IMR-90 (cell line): ENCODE measurements at regions of chr6 and their contacts with region 1.

Region 1: DNA sequence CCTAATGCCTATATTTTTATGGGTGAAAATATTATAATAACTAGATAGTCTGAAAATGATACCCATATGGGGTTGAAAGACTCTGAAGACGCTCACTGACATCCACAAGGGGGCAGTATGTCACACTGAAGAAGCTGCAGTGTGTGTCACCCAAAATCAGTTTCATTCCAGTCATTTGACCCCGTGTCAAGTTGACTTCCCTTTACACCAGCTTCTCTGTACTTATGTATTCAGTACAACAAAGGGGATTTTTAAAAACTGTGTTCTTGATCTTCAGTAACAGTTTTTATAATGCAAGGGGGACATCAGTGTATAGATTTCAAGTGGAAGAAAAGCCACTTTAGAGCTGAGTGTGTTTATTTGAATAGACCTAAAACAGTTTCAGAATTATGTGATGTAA is 19.3 kb downstream of the FAXC start:
- DNase-seq: peak; percentile 79
- ATAC-seq: peak; percentile 89
- H3K4me3 ChIP-seq: no peak overlapping the region
- H3K27ac ChIP-seq: no peak overlapping the region
- H3K4me1 ChIP-seq: no peaks in the 10 kb centered on the region
- H3K27me3 ChIP-seq: no peaks in the 10 kb centered on the region
- CTCF ChIP-seq: peak; percentile 78
- POLR2A ChIP-seq: no peak
- RAD21 ChIP-seq: peak; percentile 63

Region 2: DNA sequence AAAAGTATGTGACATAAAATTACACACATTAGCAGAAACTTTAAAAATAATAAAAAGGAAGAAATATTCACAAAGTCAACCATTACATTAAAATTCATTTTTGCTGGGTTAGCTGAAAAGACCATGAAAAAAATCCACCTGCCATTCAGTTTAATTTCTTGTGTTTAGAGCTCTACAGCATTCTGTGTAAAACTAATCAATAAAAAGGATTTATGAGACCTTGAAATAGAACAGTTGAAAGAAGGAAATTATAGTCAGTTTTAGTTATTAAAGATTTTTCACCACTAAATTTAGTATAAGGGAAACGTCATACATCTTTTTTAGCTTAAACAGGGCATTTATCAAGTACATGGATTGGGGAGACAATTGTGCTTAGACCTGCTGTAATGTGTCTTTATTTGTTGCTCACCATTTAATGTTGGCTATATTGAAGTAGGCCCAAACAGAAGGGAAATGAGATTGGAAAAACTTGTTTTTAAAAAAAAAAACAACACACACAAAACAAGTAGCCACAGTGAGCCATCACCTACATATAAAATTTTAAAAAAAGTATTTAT is 934.5 kb before region 1 on chr6:
- CTCF ChIA-PET with region 1: no interaction called
- POLR2A ChIA-PET with region 1: no interaction called
- dilution Hi-C with region 1: no loop called
- in situ Hi-C with region 1: no loop called
- intact Hi-C with region 1: no loop called
- DNase-seq: no peak
- ATAC-seq: no peak
- H3K4me3 ChIP-seq: no peak overlapping the region
- H3K27ac ChIP-seq: no peak overlapping the region
- H3K4me1 ChIP-seq: no peaks in the 10 kb centered on the region
- H3K27me3 ChIP-seq: no peaks in the 10 kb centered on the region
- CTCF ChIP-seq: no peak
- POLR2A ChIP-seq: no peak
- RAD21 ChIP-seq: no peak

Region 3: GRCh38 chr6:98627129-98627775 is 702.9 kb before region 1 on chr6:
- CTCF ChIA-PET with region 1: no interaction called
- POLR2A ChIA-PET with region 1: no interaction called
- dilution Hi-C with region 1: no loop called
- in situ Hi-C with region 1: no loop called
- intact Hi-C with region 1: no loop called
- DNase-seq: no peak
- ATAC-seq: no peak
- H3K4me3 ChIP-seq: no peak overlapping the region
- H3K27ac ChIP-seq: no peak overlapping the region
- H3K4me1 ChIP-seq: no peaks in the 10 kb centered on the region
- H3K27me3 ChIP-seq: no peaks in the 10 kb centered on the region
- CTCF ChIP-seq: no peak
- POLR2A ChIP-seq: no peak
- RAD21 ChIP-seq: no peak

Region 4: DNA sequence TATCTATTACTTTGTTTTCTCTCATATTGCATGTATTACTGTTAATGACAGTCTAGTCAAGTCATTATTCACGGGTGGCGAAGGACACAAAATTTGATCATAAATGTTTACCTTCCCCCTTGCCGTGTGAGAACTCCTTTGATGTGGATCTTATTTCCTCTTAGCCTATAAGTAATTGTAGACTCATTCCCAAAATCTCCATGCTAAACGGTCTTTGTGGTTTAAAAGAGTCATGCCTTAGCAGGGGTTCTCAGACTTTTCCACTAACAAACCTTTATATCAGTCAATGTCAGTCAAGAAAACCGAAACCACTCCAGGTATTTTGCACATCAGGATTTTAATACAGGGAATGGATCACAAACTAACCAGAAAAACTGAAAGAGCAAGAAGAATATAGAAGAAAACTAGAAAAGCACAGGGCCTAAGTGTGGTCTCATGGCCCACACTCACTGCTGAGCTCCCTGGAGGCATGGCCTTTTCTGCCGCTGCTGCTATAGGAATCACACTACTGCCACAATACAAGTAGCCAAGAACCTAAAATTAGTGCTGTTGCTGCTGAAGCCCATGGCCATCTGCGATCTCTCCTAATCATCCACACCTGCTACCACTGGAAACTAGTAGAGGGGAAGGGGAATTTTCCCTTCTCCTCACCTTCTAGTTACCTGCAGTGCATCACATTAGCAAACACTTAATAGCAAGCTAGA is 681.8 kb before region 1 on chr6:
- CTCF ChIA-PET with region 1: no interaction called
- POLR2A ChIA-PET with region 1: no interaction called
- dilution Hi-C with region 1: no loop called
- in situ Hi-C with region 1: no loop called
- intact Hi-C with region 1: no loop called
- DNase-seq: no peak
- ATAC-seq: no peak
- H3K4me3 ChIP-seq: no peak overlapping the region
- H3K27ac ChIP-seq: no peak overlapping the region
- H3K4me1 ChIP-seq: no peaks in the 10 kb centered on the region
- H3K27me3 ChIP-seq: no peaks in the 10 kb centered on the region
- CTCF ChIP-seq: no peak
- POLR2A ChIP-seq: no peak
- RAD21 ChIP-seq: no peak

Region 5: DNA sequence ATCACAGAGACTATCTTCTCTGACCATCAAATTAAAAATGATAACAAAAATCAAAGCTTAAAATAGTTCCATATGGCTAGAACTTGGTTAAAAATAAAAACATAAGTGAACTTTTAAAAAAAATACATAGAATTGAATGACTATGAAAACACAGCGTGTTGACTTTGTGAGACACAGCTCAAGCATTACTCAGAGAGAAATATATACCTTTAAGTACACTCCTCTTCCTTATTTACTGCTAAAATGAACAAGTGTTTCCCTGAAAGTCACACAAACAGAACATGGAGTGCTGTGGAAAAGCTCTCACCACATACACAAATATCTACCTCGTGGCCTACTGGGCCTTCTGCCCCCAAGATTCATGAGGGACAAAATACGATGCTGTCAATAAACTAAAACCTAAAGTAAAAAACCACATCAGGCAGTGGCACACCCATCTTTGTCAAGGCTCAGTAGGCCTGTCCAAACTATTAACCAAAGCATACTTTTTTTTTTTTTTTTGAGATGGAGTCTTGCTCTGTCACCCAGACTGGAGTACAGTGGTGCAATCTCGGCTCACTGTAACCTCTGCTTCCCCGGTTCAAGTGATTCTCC is 11.8 kb after region 1 on chr6:
- CTCF ChIA-PET with region 1: interaction called, 11 read pairs
- POLR2A ChIA-PET with region 1: no interaction called
- dilution Hi-C with region 1: no loop called
- in situ Hi-C with region 1: no loop called
- intact Hi-C with region 1: no loop called
- DNase-seq: no peak
- ATAC-seq: no peak
- H3K4me3 ChIP-seq: no peak overlapping the region
- H3K27ac ChIP-seq: no peak overlapping the region
- H3K4me1 ChIP-seq: peaks cover 3% of the 10 kb centered on the region; the same call in 1 of the 2 replicates
- H3K27me3 ChIP-seq: no peaks in the 10 kb centered on the region
- CTCF ChIP-seq: no peak
- POLR2A ChIP-seq: no peak
- RAD21 ChIP-seq: no peak

Region 6: DNA sequence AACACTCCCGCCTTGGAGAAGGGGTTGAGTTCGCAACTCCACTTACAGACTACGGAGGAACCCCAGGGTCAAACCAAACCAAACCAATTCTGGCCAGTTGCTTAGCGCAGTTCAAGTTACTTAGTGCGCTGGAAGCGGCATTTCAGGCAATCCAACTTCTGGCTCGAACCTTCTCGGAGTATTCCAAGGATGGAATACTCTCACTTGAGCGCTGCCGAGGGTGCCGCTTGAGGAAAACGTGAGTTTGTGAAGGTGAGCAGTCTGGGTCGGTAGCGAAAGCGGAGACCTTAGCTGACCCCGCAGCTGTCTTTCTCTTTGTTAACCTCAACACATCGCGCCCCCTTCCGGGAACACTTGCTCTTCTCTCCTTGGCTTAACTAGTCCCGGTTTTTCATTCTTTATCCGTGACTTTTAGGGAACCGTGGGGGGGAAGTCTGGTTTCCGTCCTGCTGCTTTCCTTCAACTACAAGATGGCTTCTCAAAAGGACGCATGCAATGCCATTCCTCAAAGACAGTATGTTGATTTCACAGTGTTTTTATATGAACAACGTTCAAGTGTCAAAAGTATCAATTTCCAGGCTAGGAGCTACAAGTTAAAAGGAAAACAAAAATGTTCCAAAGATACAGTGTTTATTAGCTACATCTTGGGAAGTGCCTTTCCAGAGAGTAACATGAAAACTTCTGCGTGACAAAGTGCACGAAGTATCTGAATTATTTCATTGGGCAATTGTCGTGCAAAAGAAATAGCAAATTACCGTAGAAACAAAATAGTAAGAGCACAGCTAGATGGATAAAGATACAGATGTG is 95.7 kb after region 1 on chr6:
- CTCF ChIA-PET with region 1: interaction called, 4 read pairs
- POLR2A ChIA-PET with region 1: no interaction called
- dilution Hi-C with region 1: no loop called
- in situ Hi-C with region 1: no loop called
- intact Hi-C with region 1: loop called (anchors 1 kb)
- DNase-seq: peak; percentile 89
- ATAC-seq: peak; percentile 66
- H3K4me3 ChIP-seq: peak overlapping the region; percentile 52
- H3K27ac ChIP-seq: peak overlapping the region; percentile 92
- H3K4me1 ChIP-seq: peaks cover 2% of the 10 kb centered on the region
- H3K27me3 ChIP-seq: no peaks in the 10 kb centered on the region
- CTCF ChIP-seq: peak; percentile 54
- POLR2A ChIP-seq: no peak; the same call in 1 of the 2 replicates
- RAD21 ChIP-seq: peak; percentile 28; the same call in 1 of the 2 replicates

Region 7: GRCh38 chr6:99746261-99746895 is 416.2 kb after region 1 on chr6:
- CTCF ChIA-PET with region 1: no interaction called
- POLR2A ChIA-PET with region 1: no interaction called
- dilution Hi-C with region 1: no loop called
- in situ Hi-C with region 1: no loop called
- intact Hi-C with region 1: loop called (anchors 2 kb)
- DNase-seq: peak; percentile 74
- ATAC-seq: peak; percentile 94
- H3K4me3 ChIP-seq: no peak overlapping the region
- H3K27ac ChIP-seq: no peak overlapping the region
- H3K4me1 ChIP-seq: no peaks in the 10 kb centered on the region
- H3K27me3 ChIP-seq: no peaks in the 10 kb centered on the region; the same call in 1 of the 2 replicates
- CTCF ChIP-seq: peak; percentile 82
- POLR2A ChIP-seq: no peak
- RAD21 ChIP-seq: peak; percentile 74